H1 (cell line): ENCODE measurements at regions of chr3 and their contacts with region 1.

Region 1: GRCh38 chr3:184469423-184469822 is 89.6 kb downstream of the CHRD start:
- DNase-seq: peak; percentile 70 to 89
- H3K4me3 ChIP-seq: no peak overlapping the region
- H3K27ac ChIP-seq: no peak overlapping the region
- H3K4me1 ChIP-seq: peaks cover 0 to 3% (median 2%) of the 10 kb centered on the region in 4 experiments; a peak in 6 of 7 replicates
- H3K27me3 ChIP-seq: no peaks in the 10 kb centered on the region
- CTCF ChIP-seq: peak; percentile 93 to 96 (median 95)
- EP300 ChIP-seq: no peak
- POLR2A ChIP-seq: no peak
- RAD21 ChIP-seq: peak; percentile 92 to 93

Region 2: GRCh38 chr3:184371570-184372018 is 97.8 kb before region 1 on chr3:
- CTCF ChIA-PET with region 1: interaction called, 121 read pairs
- POLR2A ChIA-PET with region 1: no interaction called
- DNase-seq: peak; percentile 77 to 79
- H3K4me3 ChIP-seq: no peak overlapping the region
- H3K27ac ChIP-seq: no peak overlapping the region
- H3K4me1 ChIP-seq: peaks cover 3 to 8% (median 6%) of the 10 kb centered on the region in 4 experiments; a peak in 6 of 7 replicates
- H3K27me3 ChIP-seq: no peaks in the 10 kb centered on the region; a peak in 1 of 7 replicates
- CTCF ChIP-seq: peak; percentile 91 to 97 (median 96)
- EP300 ChIP-seq: no peak
- POLR2A ChIP-seq: no peak
- RAD21 ChIP-seq: peak; percentile 99

Region 3: GRCh38 chr3:184417619-184418327 is 51.6 kb before region 1 on chr3:
- CTCF ChIA-PET with region 1: interaction called, 53 read pairs
- POLR2A ChIA-PET with region 1: interaction called, 4 read pairs
- DNase-seq: peak; percentile 19 to 84
- H3K4me3 ChIP-seq: no peak overlapping the region
- H3K27ac ChIP-seq: no peak overlapping the region
- H3K4me1 ChIP-seq: peaks cover 0 to 5% (median 4%) of the 10 kb centered on the region in 4 experiments; a peak in 2 of 7 replicates
- H3K27me3 ChIP-seq: no peaks in the 10 kb centered on the region
- CTCF ChIP-seq: peak; percentile 93 to 97 (median 96)
- EP300 ChIP-seq: no peak
- POLR2A ChIP-seq: no peak
- RAD21 ChIP-seq: peak; percentile 89 to 90

Region 4: DNA sequence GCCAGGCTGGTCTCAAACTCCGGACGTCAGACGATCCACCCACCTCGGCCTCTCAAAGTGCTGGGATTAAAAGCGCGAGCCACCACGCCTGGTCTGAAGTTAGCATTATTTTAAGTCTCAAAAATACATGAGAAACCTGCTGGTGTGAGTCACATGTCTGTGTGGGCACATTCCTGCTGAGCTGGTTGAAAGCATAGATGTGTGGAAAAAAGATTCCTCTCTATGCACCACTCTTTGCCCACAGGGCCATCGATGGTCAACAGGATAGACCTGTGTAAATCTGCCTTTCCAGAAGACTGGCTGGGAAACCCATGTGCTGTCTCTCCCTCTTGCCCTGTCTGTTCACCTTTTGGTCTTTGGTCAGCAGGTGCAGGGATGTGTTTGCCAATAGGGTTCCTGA is 26.0 kb before region 1 on chr3:
- CTCF ChIA-PET with region 1: interaction called, 14 read pairs
- POLR2A ChIA-PET with region 1: no interaction called
- DNase-seq: no peak
- H3K4me3 ChIP-seq: no peak overlapping the region
- H3K27ac ChIP-seq: no peak overlapping the region
- H3K4me1 ChIP-seq: no peaks in the 10 kb centered on the region
- H3K27me3 ChIP-seq: no peaks in the 10 kb centered on the region
- CTCF ChIP-seq: no peak
- EP300 ChIP-seq: no peak
- POLR2A ChIP-seq: no peak
- RAD21 ChIP-seq: no peak

Region 5: GRCh38 chr3:184481984-184482671 is 12.7 kb after region 1 on chr3:
- CTCF ChIA-PET with region 1: interaction called, 62 read pairs
- POLR2A ChIA-PET with region 1: no interaction called
- DNase-seq: no peak
- H3K4me3 ChIP-seq: no peak overlapping the region
- H3K27ac ChIP-seq: no peak overlapping the region
- H3K4me1 ChIP-seq: no peaks in the 10 kb centered on the region
- H3K27me3 ChIP-seq: no peaks in the 10 kb centered on the region
- CTCF ChIP-seq: no peak
- EP300 ChIP-seq: no peak
- POLR2A ChIP-seq: no peak
- RAD21 ChIP-seq: no peak

Region 6: GRCh38 chr3:184513276-184514170 is 44.1 kb after region 1 on chr3:
- CTCF ChIA-PET with region 1: interaction called, 87 read pairs
- POLR2A ChIA-PET with region 1: no interaction called
- DNase-seq: peak; percentile 75 to 95
- H3K4me3 ChIP-seq: peak overlapping the region; percentile 13 to 61 (median 50)
- H3K27ac ChIP-seq: no peak overlapping the region
- H3K4me1 ChIP-seq: peaks cover 0 to 5% (median 1%) of the 10 kb centered on the region in 4 experiments; a peak in 2 of 7 replicates
- H3K27me3 ChIP-seq: peaks cover 10 to 27% (median 17%) of the 10 kb centered on the region in 4 experiments
- CTCF ChIP-seq: peak; percentile 75 to 86 (median 79)
- EP300 ChIP-seq: no peak
- POLR2A ChIP-seq: no peak
- RAD21 ChIP-seq: peak; percentile 81 to 86

Region 7: DNA sequence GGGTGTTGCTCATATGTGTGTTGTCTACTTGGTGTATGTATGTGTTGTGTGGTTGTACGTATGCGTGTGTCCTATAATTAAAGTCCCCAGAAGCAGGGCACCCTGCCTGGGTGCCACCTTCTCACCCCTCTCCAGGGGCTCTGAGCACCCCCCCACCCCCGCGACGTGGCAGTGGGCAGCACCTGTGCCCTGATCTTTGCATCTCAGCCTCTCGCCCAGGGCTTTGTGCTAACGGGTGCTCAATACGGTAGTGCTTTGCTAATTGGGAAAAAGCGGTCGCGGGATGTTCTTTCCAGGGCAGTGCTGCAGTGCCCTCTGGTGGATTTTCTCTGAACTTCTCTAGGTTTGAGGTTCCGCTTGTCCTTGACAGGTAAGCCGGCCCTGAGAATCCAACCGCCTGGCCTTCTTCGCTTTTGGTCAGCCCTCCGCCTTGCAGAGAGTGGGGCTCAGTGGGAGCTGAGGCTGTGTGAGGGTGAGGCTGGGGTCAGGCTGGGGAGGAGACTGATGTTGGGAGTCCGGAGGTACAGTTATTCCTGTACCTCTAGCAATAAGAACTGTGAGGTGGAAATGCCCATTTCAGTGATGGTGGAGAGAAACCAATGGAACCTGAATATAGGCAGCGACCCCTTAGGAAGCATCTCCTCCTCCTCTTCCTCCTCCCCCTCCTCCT is 74.6 kb after region 1 on chr3:
- CTCF ChIA-PET with region 1: interaction called, 150 read pairs
- POLR2A ChIA-PET with region 1: no interaction called
- DNase-seq: peak in 1 of 2 experiments; percentile 94
- H3K4me3 ChIP-seq: no peak overlapping the region
- H3K27ac ChIP-seq: no peak overlapping the region
- H3K4me1 ChIP-seq: peaks cover 0 to 5% (median under 1%) of the 10 kb centered on the region in 4 experiments; a peak in 3 of 7 replicates
- H3K27me3 ChIP-seq: peaks cover 0 to 3% (median 0%) of the 10 kb centered on the region in 4 experiments; a peak in 1 of 7 replicates
- CTCF ChIP-seq: peak; percentile 56 to 94 (median 81)
- EP300 ChIP-seq: no peak
- POLR2A ChIP-seq: no peak
- RAD21 ChIP-seq: peak; percentile 94 to 96

Region 8: GRCh38 chr3:185009650-185010049 is 540.2 kb after region 1 on chr3:
- CTCF ChIA-PET with region 1: no interaction called
- POLR2A ChIA-PET with region 1: no interaction called
- DNase-seq: no peak
- H3K4me3 ChIP-seq: no peak overlapping the region; a peak in 1 of 8 replicates
- H3K27ac ChIP-seq: no peak overlapping the region
- H3K4me1 ChIP-seq: no peaks in the 10 kb centered on the region
- H3K27me3 ChIP-seq: no peaks in the 10 kb centered on the region
- CTCF ChIP-seq: no peak
- EP300 ChIP-seq: no peak
- POLR2A ChIP-seq: no peak
- RAD21 ChIP-seq: no peak